Posterior vena cava (tissue), 2 donors: ENCODE measurements at regions of chr1 and their contacts with region 1.

Region 1: DNA sequence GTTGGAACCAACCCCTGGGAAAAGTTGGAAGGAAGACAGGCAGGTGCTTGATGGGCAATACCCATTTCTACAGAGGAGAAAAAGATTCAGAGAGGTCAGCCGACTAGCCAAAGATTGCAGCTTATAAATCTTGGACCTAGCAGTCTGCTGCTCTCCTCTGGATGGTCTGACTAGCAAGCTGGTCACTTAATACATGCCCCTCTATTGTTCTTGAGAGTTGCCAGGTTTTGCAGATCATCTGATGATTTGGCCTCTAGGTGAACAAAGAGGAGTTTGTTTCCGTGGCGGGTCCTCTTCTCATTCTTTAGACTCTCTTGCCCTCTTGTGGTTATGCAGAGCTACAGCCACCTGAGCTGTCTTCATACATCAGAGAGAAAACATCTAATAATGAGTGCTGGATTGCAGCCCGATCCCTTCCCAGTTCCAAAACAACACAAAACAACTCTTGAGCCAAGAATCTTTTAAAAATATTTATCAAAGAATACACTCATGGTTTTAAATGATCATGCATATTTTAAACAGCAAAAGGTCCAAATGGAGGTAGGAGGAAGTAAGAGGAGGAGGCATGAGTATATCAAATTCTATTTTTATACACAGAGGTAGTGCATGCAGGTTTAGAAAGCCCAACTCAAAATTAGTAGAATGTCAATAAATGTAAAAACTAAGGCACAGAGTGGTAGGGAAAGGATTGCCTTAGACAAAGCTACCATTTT is 115.7 kb downstream of the SLC30A10 start:
- DNase-seq: no peak

Region 2: DNA sequence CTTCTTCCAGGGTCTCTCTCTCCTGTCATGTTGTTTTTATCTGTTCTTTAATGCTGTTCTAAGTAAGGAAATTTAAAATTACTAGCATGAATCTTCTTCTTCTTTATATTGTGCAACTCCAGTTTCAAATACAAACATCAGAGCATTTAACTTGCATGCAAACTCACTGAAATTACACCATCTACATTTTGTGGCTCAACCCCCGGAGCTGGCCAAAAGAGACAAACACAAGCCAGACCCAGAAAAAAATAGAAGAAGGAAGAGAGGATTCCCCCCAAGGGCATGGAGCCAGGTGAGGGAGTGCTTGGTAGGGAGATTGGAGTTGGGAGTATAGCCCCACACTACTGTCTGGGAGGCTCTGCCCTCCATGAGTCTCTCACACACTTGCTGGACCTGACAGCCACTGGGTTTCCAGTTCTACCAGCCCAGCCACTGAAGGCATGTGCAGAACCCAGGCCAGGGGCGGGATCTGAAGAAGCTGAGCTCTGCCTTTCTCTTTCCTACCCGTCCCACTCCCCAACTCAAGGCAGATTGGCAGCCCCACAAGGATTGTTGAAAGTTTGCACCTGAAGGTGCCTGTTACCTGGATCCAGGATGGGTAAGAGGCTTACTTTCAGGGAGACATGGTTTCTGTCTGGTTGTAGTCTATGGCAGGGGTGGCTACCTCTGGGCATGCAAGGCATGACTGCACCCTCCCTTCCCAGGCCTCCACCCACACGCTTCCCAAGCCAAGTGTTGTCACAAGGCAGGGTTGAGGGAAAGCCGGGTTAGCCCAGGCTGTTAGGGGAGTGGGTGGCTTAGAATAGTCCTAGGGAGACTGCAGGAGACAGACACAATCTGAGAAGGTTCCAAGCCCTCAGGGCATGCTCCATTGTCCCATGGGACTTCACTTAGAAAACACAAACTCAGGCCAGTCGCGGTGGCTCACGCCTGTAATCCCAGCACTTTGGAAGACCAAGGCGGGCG is 1170.3 kb before region 1 on chr1:
- intact Hi-C with region 1: no loop called
- DNase-seq: no peak

Region 3: GRCh38 chr1:219010720-219011119 is 801.9 kb before region 1 on chr1:
- intact Hi-C with region 1: no loop called
- DNase-seq: no peak

Region 4: DNA sequence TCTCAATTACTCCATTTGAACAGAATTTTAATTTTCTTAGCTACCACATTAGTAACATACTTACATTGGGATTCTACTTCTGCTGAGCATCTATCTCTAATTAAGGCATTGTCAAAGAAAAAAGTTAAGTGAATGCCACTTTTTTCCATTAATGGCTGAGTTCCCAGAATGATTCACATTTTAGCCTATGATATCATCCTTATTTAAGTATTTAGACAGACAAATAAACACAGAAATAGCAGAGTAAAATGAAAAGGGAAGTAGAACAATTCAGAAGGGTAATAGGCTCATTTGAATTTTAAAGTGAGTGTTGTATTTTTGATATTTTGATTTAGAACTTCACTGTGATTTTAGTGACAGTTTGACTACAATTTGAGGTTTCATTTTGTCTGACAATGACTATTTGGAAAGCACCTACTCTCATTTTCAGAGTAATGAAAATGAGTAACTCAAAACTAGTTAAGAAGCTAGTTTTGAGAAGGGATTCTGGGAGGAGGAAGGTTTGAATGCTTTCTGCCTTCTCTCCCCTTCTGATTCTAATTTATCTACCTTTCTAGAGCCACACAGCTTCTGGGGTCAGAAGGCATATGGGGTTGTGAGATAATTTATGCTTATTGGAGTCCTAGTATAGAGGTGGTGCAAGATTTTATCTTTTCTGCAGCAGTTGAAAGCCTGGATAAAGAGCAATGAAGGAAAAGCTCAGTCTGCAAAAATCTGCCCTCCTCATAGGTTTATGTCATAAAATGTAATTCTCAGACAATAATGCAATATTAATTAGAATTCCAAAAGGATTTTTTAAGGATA is 623.4 kb before region 1 on chr1:
- intact Hi-C with region 1: no loop called
- DNase-seq: no peak

Region 5: GRCh38 chr1:219660666-219661463 is 151.8 kb before region 1 on chr1:
- intact Hi-C with region 1: loop called in 1 of 2 experiments (anchors 10 kb)
- DNase-seq: peak; percentile 96

Region 6: DNA sequence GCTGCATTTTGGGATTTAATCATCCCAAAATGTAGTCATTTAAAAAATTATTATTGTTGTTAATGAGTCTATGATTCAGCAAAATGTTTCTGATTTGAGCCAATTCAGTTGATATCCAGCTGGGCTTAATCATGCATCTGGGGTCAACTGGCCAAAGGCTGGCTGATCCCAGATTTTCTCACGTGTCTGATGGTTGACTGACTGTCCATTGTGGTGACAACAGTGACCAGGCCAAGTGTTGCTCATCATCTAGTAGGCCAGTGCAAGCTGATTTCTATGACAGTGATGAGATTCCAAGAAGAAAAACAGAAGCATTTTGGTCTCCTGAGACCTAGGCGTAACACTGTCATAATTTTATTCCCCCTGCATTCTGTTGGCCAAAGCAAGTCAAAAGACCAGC is 119.7 kb before region 1 on chr1:
- intact Hi-C with region 1: no loop called
- DNase-seq: no peak

Region 7: GRCh38 chr1:219833214-219833815 is 20.7 kb after region 1 on chr1:
- intact Hi-C with region 1: loop called in 1 of 2 experiments (anchors 1 kb)
- DNase-seq: no peak